Caco-2 (cell line): ENCODE measurements at regions of chr5 and their contacts with region 1.

Region 1: GRCh38 chr5:113330533-113331208 is 104.1 kb downstream of the TSSK1B start:
- DNase-seq: peak in 1 of 2 experiments; percentile 33
- H3K4me3 ChIP-seq: no peak overlapping the region
- H3K4me3 Mint-ChIP-seq: no peak overlapping the region
- H3K27ac Mint-ChIP-seq: no peak overlapping the region
- H3K4me1 ChIP-seq: no peaks in the 10 kb centered on the region
- H3K4me1 Mint-ChIP-seq: no peaks in the 10 kb centered on the region
- H3K27me3 ChIP-seq: no peaks in the 10 kb centered on the region
- H3K27me3 Mint-ChIP-seq: peaks cover 11% of the 10 kb centered on the region
- CTCF ChIP-seq: peak; percentile 49 to 53

Region 2: GRCh38 chr5:112995764-112996618 is 334.7 kb before region 1 on chr5:
- CTCF ChIA-PET with region 1: no interaction called
- POLR2A ChIA-PET with region 1: no interaction called
- intact Hi-C with region 1: loop called (anchors 2 kb)
- DNase-seq: peak; percentile 60 to 75
- H3K4me3 ChIP-seq: no peak overlapping the region
- H3K4me3 Mint-ChIP-seq: no peak overlapping the region
- H3K27ac Mint-ChIP-seq: no peak overlapping the region
- H3K4me1 ChIP-seq: no peaks in the 10 kb centered on the region
- H3K4me1 Mint-ChIP-seq: no peaks in the 10 kb centered on the region
- H3K27me3 ChIP-seq: no peaks in the 10 kb centered on the region
- H3K27me3 Mint-ChIP-seq: no peaks in the 10 kb centered on the region
- CTCF ChIP-seq: peak; percentile 81 to 90

Region 3: DNA sequence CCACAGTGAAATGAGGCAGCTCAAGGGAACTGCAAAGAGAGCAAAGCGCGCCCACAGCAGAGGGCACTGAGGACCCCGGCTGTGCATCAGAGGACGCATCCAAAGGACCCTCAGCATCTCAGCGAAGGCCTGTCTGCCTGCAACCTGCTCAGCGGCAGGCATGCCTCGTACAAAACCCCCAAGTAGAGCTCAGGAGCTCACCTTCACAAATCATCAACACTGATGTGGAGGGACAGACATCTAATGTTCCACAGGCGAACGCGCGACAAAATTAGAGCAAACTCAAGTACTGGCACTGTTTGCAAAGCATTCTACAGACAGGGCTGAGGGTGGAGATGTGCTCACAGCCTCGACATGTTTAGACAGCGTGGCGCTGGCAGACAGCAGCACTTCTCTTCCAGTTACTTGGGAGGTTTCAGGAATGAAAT is 273.1 kb before region 1 on chr5:
- CTCF ChIA-PET with region 1: no interaction called
- POLR2A ChIA-PET with region 1: no interaction called
- intact Hi-C with region 1: loop called (anchors 1 kb)
- DNase-seq: no peak
- H3K4me3 ChIP-seq: no peak overlapping the region
- H3K4me3 Mint-ChIP-seq: no peak overlapping the region
- H3K27ac Mint-ChIP-seq: no peak overlapping the region
- H3K4me1 ChIP-seq: no peaks in the 10 kb centered on the region
- H3K4me1 Mint-ChIP-seq: no peaks in the 10 kb centered on the region
- H3K27me3 ChIP-seq: no peaks in the 10 kb centered on the region
- H3K27me3 Mint-ChIP-seq: peaks cover 13% of the 10 kb centered on the region
- CTCF ChIP-seq: no peak

Region 4: DNA sequence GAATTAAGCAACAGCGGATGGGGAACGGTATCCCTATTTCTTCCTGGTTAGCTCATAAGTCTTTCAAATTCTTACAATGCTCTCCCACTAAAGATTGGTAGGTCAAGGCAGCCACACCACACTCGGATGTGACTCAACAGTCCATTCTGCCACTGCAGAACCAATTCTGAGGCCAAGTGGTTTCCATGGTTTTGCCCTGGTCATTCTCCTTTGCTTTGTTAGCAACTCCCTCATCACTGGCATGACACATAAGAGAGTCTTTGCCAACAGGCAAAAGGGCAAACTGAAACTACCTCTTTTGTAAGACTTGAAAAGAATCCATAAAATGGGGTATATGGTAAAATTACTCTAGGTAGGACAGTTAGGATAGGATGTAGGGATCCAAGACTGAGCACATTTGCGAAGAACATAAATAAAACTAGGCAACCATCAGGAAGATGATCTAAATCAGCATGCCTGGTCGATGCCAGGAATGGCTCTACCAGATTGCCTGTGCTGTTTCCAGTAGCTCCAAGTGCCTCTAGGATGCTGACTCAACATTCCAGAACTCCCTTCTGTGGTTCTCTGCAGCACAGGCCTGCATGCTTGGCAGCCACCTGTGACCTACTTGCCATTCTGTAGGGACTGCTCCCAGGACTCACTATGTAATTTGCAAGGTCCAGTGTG is 248.7 kb before region 1 on chr5:
- CTCF ChIA-PET with region 1: no interaction called
- POLR2A ChIA-PET with region 1: no interaction called
- intact Hi-C with region 1: loop called (anchors 10 kb)
- DNase-seq: no peak
- H3K4me3 ChIP-seq: no peak overlapping the region
- H3K4me3 Mint-ChIP-seq: no peak overlapping the region
- H3K27ac Mint-ChIP-seq: no peak overlapping the region
- H3K4me1 ChIP-seq: no peaks in the 10 kb centered on the region; the same call in 1 of the 2 replicates
- H3K4me1 Mint-ChIP-seq: no peaks in the 10 kb centered on the region
- H3K27me3 ChIP-seq: no peaks in the 10 kb centered on the region
- H3K27me3 Mint-ChIP-seq: peaks cover 12% of the 10 kb centered on the region
- CTCF ChIP-seq: no peak

Region 5: GRCh38 chr5:113123618-113124017 is 207.1 kb before region 1 on chr5:
- CTCF ChIA-PET with region 1: no interaction called
- POLR2A ChIA-PET with region 1: no interaction called
- intact Hi-C with region 1: loop called (anchors 2 kb)
- DNase-seq: peak in 1 of 2 experiments; percentile 12
- H3K4me3 ChIP-seq: no peak overlapping the region
- H3K4me3 Mint-ChIP-seq: no peak overlapping the region
- H3K27ac Mint-ChIP-seq: no peak overlapping the region
- H3K4me1 ChIP-seq: no peaks in the 10 kb centered on the region
- H3K4me1 Mint-ChIP-seq: no peaks in the 10 kb centered on the region
- H3K27me3 ChIP-seq: no peaks in the 10 kb centered on the region
- H3K27me3 Mint-ChIP-seq: peaks cover 10% of the 10 kb centered on the region
- CTCF ChIP-seq: peak; percentile 10 to 27

Region 6: DNA sequence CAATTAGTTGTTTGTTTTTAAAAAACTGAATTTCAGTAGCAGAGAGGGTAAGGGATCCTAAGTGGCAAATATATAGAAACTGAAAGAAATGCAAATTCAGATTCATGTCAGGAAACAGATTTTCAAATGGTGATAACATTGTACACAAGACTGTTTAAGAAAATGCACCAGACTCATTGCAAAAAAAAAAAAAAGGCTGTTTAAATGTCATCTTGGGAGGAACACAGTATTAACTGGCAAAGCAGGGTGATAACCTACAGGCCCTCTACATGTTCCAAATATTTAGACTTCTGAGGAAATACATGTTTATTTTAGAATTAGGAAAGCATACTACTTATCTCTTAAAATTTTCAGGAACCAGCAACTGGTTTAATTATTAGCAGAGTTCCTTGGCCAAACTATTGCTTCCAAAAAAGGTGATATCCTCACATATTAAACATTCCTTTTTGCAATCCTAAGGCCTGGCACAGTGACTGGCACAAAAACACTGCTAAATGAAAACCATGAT is 10.3 kb before region 1 on chr5:
- CTCF ChIA-PET with region 1: no interaction called
- POLR2A ChIA-PET with region 1: no interaction called
- intact Hi-C with region 1: no loop called
- DNase-seq: peak in 1 of 2 experiments; percentile 15
- H3K4me3 ChIP-seq: no peak overlapping the region
- H3K4me3 Mint-ChIP-seq: no peak overlapping the region
- H3K27ac Mint-ChIP-seq: no peak overlapping the region
- H3K4me1 ChIP-seq: peaks cover 4% of the 10 kb centered on the region; the same call in 1 of the 2 replicates
- H3K4me1 Mint-ChIP-seq: peaks cover 8% of the 10 kb centered on the region
- H3K27me3 ChIP-seq: no peaks in the 10 kb centered on the region
- H3K27me3 Mint-ChIP-seq: peaks cover 14% of the 10 kb centered on the region
- CTCF ChIP-seq: no peak

Region 7: DNA sequence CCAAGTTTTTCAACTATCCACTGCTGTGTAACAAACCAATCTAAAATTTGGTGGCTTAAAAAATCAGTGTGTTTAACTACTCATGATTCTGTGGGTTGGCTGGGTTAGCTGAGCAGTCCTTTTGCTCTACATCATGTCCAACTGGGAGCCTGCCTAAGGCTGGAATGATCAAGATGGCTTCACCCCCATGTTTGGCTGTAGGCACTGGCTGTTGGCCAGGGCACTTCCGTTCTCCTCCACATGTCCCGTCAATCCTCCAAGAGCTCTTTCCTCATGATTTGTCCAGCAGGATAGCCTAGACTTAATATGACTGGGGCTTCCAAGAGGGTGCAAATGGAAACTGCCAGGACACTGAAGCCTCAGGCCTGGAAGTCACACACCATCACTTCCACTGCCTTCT is 121.1 kb after region 1 on chr5:
- CTCF ChIA-PET with region 1: no interaction called
- POLR2A ChIA-PET with region 1: no interaction called
- intact Hi-C with region 1: no loop called
- DNase-seq: no peak
- H3K4me3 ChIP-seq: no peak overlapping the region
- H3K4me3 Mint-ChIP-seq: no peak overlapping the region
- H3K27ac Mint-ChIP-seq: no peak overlapping the region
- H3K4me1 ChIP-seq: no peaks in the 10 kb centered on the region
- H3K4me1 Mint-ChIP-seq: no peaks in the 10 kb centered on the region
- H3K27me3 ChIP-seq: no peaks in the 10 kb centered on the region
- H3K27me3 Mint-ChIP-seq: peaks cover 19% of the 10 kb centered on the region
- CTCF ChIP-seq: no peak

Region 8: DNA sequence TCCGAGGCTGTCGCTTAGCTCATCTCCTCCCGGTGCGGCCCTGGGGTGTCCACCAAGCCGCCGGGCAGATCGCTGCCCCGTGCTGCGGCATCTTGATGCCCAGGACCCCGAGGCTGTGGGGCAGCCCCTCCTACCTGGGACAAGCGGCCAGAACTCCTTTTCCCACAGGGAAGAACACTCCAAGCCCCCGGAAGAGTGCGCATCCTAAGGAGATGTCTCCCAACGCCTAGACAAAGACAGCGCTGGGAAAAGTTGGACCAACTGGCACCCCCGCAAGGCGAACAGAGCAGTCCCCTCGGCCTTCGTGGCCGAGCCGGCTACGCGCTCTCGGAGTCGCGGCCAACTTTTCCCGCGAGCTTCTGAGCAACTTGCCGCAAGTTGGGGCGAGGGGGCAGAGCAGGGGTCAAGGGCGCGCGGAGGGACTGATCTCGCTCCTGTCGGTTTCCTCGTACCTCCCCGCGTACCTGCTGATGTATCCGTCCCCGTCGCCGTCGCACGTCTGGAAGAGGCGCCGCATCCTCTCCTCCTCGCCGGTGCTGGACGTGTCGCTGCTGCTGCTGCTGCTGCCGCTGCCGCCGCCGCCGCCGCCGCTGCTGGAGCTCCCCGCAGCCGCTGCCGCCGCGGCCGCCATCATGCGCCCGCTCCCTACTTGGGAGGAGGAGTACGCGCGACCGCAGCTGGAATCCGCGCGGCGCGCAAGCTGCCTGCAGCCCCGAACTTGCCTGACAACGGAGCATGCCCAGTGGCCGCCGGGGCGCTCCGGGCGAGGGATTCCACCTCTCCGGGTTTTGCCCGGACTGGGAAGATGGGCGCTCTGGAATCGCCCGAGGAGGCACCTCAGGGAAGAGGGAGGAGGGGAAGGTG is 157.3 kb after region 1 on chr5 and contains the start of gene MCC:
- CTCF ChIA-PET with region 1: no interaction called
- POLR2A ChIA-PET with region 1: no interaction called
- intact Hi-C with region 1: no loop called
- DNase-seq: peak; percentile 82
- H3K4me3 ChIP-seq: peak within 1 kb of the TSS; percentile 65
- H3K4me3 Mint-ChIP-seq: peak within 1 kb of the TSS; percentile 91
- H3K27ac Mint-ChIP-seq: no peak within 1 kb of the TSS
- H3K4me1 ChIP-seq: no peaks in the 10 kb centered on the region
- H3K4me1 Mint-ChIP-seq: no peaks in the 10 kb centered on the region
- H3K27me3 ChIP-seq: no peaks in the 10 kb centered on the region; the same call in 1 of the 2 replicates
- H3K27me3 Mint-ChIP-seq: peaks cover 4% of the 10 kb centered on the region
- CTCF ChIP-seq: no peak
- total RNA-seq, gene MCC: 0.09 TPM in 1 of 2 replicates, not detected in the other